Body of pancreas (tissue), 4 donors: ENCODE measurements at regions of chr11 and their contacts with region 1.

Region 1: DNA sequence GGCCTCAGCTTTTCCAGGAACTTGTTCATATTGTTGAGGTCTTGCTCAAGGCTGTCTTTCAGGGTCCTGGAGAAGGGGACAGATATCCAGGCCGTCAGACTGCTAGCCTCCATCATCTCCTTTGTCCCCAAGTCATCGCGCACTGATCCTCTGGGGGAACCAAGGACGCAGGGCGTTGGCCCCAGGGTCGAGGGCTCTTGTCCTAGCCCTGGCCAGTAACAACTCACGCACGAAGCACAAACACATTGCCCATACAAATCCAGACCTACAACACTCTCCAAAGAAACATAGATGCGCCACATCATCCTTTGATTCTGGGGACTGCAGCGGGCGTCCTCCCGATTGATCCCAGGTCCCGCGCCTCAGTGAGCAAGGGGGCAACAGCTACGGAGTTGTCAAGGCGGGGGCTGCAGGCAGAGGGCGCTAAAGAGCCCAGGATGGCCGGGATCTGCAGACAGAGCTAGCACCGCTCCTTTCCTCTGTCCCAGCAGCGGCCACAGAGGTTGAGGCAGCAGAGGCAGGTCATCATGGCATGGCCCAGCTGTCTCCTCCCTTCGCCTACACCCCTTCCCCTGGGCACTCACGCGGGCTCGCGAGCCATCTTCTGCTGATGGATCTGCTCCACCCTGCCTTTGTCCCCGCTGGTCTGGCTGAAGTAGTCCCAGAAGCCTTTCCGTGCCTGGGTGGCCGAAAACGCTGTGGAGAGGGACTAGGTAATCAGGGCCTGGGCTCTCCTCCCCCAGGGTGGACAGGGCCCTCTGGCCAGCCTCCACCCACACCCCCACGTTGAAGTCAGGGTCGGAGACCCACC is 472 bp downstream of the APOA5 start:
- DNase-seq: peak; percentile 80 to 84 (median 82)
- ATAC-seq: peak; percentile 69
- H3K4me3 ChIP-seq: no peak overlapping the region
- H3K27ac ChIP-seq: no peak overlapping the region
- H3K4me1 ChIP-seq: peaks cover 45% of the 10 kb centered on the region
- H3K27me3 ChIP-seq: no peaks in the 10 kb centered on the region
- CTCF ChIP-seq: peak; percentile 80 to 95 (median 90)
- POLR2A ChIP-seq: no peak

Region 2: DNA sequence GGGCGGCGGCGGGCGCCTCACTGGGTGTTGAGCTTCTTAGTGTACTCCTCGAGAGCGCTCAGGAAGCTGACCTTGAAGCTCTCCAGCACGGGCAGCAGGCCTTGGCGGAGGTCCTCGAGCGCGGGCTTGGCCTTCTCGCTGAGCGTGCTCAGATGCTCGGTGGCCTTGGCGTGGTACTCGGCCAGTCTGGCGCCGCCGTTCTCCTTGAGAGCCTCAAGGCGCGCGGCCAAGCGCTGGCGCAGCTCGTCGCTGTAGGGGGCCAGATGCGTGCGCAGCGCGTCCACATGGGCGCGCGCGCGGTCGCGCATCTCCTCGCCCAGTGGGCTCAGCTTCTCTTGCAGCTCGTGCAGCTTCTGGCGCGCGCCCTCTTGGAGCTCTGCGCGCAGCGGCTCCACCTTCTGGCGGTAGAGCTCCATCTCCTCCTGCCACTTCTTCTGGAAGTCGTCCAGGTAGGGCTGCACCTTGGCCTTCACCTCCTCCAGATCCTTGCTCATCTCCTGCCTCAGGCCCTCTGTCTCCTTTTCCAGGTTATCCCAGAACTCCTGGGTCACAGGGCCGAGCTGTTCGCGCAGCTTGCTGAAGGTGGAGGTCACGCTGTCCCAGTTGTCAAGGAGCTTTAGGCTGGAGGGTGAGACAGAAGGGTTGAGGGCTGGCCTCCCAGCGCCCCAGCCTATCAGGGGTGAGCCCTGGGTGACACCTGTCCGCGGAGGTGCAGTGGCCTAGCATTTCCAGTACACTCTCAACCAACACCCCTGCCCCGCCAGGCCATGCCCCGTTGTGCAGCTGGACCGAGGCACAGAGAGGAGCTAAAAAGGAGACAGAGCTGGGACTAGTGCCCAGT is 44.8 kb after region 1 on chr11:
- intact Hi-C with region 1: loop called (anchors 5 kb)
- DNase-seq: peak; percentile 90 to 94 (median 90)
- ATAC-seq: peak; percentile 85
- H3K4me3 ChIP-seq: no peak overlapping the region
- H3K27ac ChIP-seq: peak overlapping the region in 3 of 4 donors; percentile 3 to 64 (median 54)
- H3K4me1 ChIP-seq: peaks cover 57% of the 10 kb centered on the region
- H3K27me3 ChIP-seq: no peaks in the 10 kb centered on the region
- CTCF ChIP-seq: peak; percentile 41 to 89 (median 71)
- POLR2A ChIP-seq: peak in 1 of 3 donors; percentile 7

Region 3: GRCh38 chr11:117037279-117037974 is 246.2 kb after region 1 on chr11:
- intact Hi-C with region 1: no loop called
- DNase-seq: no peak
- ATAC-seq: no peak
- H3K4me3 ChIP-seq: no peak overlapping the region
- H3K27ac ChIP-seq: no peak overlapping the region
- H3K4me1 ChIP-seq: peaks cover 20% of the 10 kb centered on the region
- H3K27me3 ChIP-seq: no peaks in the 10 kb centered on the region
- CTCF ChIP-seq: no peak
- POLR2A ChIP-seq: no peak

Region 4: DNA sequence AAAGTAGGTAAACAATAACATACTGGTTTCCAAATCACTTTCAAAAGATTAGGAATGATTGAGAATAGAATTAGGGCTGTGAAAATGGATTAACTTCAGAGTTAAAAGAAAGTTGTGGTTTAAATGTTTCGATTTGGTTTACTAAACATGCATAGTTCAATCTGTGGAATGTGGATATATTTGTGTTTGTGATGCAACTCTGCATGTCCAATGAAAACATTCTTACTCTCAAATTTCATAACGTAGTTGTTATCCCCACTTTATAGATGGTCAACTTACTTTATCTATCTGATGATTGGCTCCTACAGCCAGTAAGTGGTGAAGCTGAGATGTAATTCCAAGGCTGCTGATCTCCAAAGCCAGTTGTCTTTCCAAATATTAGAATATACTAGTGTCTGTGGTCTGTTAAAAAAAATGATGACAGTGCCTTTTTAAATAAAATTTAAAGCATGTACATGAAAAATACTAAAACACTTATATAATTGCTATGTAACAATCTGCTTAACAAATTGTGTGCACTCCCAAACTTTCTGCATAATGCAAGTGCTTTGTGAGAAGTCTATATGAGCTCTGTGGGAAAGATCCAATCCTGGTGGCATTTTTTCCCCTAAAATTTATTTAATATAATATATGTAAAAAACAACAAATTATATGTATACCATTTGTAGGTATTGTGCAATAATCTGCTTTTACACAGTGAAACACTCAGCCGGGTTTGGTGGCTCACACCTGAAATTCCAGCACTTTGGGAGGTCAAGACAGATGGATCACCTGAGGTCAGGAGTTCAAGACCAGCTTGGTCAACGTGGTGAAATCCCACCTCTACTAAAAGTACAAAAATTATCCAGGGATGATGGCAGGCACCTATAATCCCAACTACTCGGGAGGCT is 316.7 kb after region 1 on chr11:
- intact Hi-C with region 1: loop called (anchors 10 kb)
- DNase-seq: no peak
- ATAC-seq: no peak
- H3K4me3 ChIP-seq: no peak overlapping the region
- H3K27ac ChIP-seq: no peak overlapping the region
- H3K4me1 ChIP-seq: no peaks in the 10 kb centered on the region
- H3K27me3 ChIP-seq: no peaks in the 10 kb centered on the region
- CTCF ChIP-seq: no peak
- POLR2A ChIP-seq: no peak